Ascending aorta (tissue), 2 donors: ENCODE measurements at regions of chr14 and their contacts with region 1.

Region 1: GRCh38 chr14:105090493-105091053 is 25.3 kb upstream of the GPR132 start:
- DNase-seq: peak in 1 of 2 donors; percentile 93
- H3K4me3 ChIP-seq: no peak overlapping the region
- H3K27ac ChIP-seq: peak overlapping the region; percentile 90 to 95
- H3K4me1 ChIP-seq: peaks cover 22 to 45% of the 10 kb centered on the region in 2 donors
- H3K27me3 ChIP-seq: no peaks in the 10 kb centered on the region
- CTCF ChIP-seq: peak; percentile 87 to 95 (median 94)

Region 2: GRCh38 chr14:105020815-105021655 is 69.5 kb before region 1 on chr14 and contains the start of gene CDCA4:
- intact Hi-C with region 1: loop called (anchors 5 kb)
- DNase-seq: peak; percentile 90 to 98
- H3K4me3 ChIP-seq: peak within 1 kb of the TSS; percentile 87 to 100
- H3K27ac ChIP-seq: peak within 1 kb of the TSS; percentile 51 to 69
- H3K4me1 ChIP-seq: peaks cover 10% of the 10 kb centered on the region in 2 donors
- H3K27me3 ChIP-seq: no peaks in the 10 kb centered on the region
- CTCF ChIP-seq: no peak
- total RNA-seq, gene CDCA4: 2.3 TPM

Region 3: DNA sequence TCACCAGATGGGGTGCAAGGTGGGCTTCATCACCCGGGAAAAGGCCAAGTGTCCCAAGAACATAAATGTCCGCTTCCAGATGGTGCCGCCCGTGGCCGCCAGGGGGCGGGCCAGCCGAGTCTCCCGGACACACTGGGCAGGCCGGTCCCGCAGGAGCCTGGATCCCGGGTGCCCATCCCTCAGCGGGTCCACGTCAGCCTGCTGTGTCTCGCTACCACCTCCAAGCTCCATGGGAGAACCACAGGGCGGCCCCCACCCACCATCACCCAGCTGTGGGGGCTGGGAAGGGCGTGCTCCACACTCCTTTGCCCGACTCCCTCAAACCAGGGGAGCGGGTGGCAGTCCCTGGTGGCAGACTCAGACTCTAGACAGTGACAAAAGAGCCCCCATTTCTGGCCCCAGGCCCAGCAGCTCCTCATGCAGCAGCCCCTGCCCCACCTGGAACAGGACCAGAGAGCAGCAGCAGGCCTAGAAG is 112.5 kb after region 1 on chr14:
- intact Hi-C with region 1: loop called (anchors 5 kb)
- DNase-seq: peak in 1 of 2 donors; percentile 89
- H3K4me3 ChIP-seq: no peak overlapping the region
- H3K27ac ChIP-seq: no peak overlapping the region
- H3K4me1 ChIP-seq: peaks cover 4 to 26% of the 10 kb centered on the region in 2 donors
- H3K27me3 ChIP-seq: peaks cover 8% of the 10 kb centered on the region
- CTCF ChIP-seq: peak; percentile 81 to 92 (median 87)

Region 4: DNA sequence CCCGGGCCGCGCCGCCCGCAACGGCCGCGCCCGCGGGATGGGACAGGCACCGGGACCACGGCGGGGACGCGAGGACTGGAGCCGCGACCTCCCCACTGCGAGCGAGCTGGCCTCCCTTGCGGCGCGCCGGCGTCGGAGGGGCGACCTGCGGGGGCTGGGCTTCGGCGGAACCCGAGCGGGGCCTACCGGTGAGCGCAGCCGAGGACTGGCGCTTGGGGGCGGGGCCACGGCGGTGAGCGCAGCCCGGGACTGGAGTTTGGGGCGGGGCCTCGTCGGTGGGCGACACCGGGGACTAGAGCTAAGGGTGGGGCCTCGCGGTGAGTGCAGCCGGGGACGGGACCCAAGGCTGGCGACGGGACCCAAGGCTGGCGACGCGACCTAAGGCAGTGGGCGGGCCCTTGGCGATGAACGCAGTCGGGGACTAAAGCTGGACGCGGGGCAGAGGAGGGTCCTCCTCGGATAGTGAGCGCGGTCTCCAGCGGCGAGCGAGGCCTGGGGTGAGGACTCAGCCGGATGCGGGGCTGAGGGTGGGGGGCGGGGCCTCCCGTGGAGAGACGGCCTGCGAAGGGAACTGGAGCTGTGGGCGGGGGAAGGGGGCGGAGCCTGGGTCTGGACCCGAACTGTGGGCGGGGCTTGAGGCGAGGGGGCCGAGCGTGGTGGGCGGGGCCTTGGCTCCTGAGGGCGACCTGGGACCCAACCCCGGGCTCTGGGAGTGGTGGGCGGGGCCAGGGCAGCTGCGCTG is 210.4 kb after region 1 on chr14 and contains the start of gene BRF1:
- intact Hi-C with region 1: loop called (anchors 2 kb)
- DNase-seq: peak; percentile 88 to 98
- H3K4me3 ChIP-seq: peak within 1 kb of the TSS; percentile 62 to 84
- H3K27ac ChIP-seq: peak within 1 kb of the TSS; percentile 93 to 96
- H3K4me1 ChIP-seq: peaks cover 8 to 14% of the 10 kb centered on the region in 2 donors
- H3K27me3 ChIP-seq: no peaks in the 10 kb centered on the region
- CTCF ChIP-seq: no peak
- total RNA-seq, gene BRF1: 60.9 TPM

Region 5: GRCh38 chr14:105351920-105352851 is 261.6 kb after region 1 on chr14:
- intact Hi-C with region 1: loop called (anchors 2 kb)
- DNase-seq: peak; percentile 40 to 86
- H3K4me3 ChIP-seq: no peak overlapping the region
- H3K27ac ChIP-seq: no peak overlapping the region
- H3K4me1 ChIP-seq: peaks cover 0 to 3% of the 10 kb centered on the region in 2 donors
- H3K27me3 ChIP-seq: no peaks in the 10 kb centered on the region
- CTCF ChIP-seq: peak; percentile 76 to 84 (median 81)

Region 6: GRCh38 chr14:105490572-105491366 is 400.2 kb after region 1 on chr14 and contains the start of gene TEDC1:
- intact Hi-C with region 1: loop called (anchors 5 kb)
- DNase-seq: peak; percentile 100
- H3K4me3 ChIP-seq: peak within 1 kb of the TSS; percentile 77 to 90
- H3K27ac ChIP-seq: peak within 1 kb of the TSS; percentile 89 to 99
- H3K4me1 ChIP-seq: peaks cover 19 to 37% of the 10 kb centered on the region in 2 donors
- H3K27me3 ChIP-seq: no peaks in the 10 kb centered on the region
- CTCF ChIP-seq: peak; percentile 46 to 99 (median 57)
- total RNA-seq, gene TEDC1: 12.7 TPM